Vagina (tissue), 2 donors: ENCODE measurements at regions of chr1 and their contacts with region 1.

Region 1: DNA sequence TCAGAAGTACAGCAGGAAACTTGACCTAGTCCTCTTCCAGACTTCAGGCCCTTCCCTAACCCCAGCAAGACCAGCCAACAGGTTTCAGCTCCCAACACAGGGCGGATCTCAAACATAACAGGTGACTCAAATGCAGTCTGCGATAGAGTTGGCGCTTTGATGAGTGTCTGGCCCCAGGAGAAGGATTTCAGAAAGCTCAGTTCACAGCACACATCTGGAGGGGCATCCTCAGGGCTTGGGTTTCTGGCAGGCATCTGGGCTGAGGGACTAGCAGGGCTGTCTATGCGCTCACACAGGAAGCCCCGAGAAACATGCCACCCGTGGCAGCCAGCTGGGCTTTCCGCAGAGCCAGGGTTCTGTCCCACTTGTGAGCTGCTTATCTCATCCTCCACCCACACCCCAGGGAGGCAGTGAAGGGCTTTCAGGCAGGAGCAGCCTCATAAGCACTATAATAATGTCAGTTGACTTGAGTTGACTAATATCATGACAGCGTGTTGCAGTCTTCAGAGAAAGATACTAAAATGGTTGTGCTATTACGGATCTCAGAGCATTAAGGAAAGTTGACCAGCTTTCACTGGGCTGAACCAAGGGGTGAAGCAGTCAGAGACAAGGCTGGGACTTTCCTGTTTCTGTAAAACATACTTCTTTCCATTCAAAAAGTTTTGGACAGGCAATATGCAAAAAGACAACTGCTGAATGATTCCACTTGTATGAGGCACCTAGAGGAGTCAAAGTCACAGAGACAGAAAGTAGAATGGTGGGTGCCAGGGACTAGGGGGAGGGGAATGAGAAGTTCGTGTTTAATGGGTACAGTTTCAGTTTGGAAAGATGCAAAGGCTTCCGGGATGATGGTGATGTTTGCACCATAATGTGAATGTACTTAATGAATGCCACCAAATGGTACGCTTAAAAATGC is 233.0 kb upstream of the IRF2BP2 start:
- DNase-seq: no peak
- H3K4me3 ChIP-seq: no peak overlapping the region
- H3K27ac ChIP-seq: no peak overlapping the region
- H3K4me1 ChIP-seq: peaks cover 7% of the 10 kb centered on the region
- H3K27me3 ChIP-seq: no peaks in the 10 kb centered on the region
- CTCF ChIP-seq: no peak
- POLR2A ChIP-seq: no peak

Region 2: GRCh38 chr1:234856845-234857245 is 13.9 kb after region 1 on chr1:
- intact Hi-C with region 1: loop called (anchors 1 kb)
- DNase-seq: no peak
- H3K4me3 ChIP-seq: no peak overlapping the region
- H3K27ac ChIP-seq: peak overlapping the region; percentile 7
- H3K4me1 ChIP-seq: peaks cover 5% of the 10 kb centered on the region
- H3K27me3 ChIP-seq: no peaks in the 10 kb centered on the region
- CTCF ChIP-seq: no peak
- POLR2A ChIP-seq: no peak